Activated CD8-positive, alpha-beta T cell treated with anti-CD3 and anti-CD28 coated beads for 36 hours (primary cell): ENCODE measurements at regions of chr1 and their contacts with region 1.

Region 1: GRCh38 chr1:9867408-9868243 is 42.4 kb downstream of the CTNNBIP1 start:
- DNase-seq: peak; percentile 94
- ATAC-seq: peak; percentile 99
- H3K4me3 Mint-ChIP-seq: no peak overlapping the region
- H3K27ac Mint-ChIP-seq: no peak overlapping the region
- H3K4me1 Mint-ChIP-seq: no peaks in the 10 kb centered on the region
- H3K27me3 Mint-ChIP-seq: no peaks in the 10 kb centered on the region
- CTCF ChIP-seq: peak; percentile 94

Region 2: DNA sequence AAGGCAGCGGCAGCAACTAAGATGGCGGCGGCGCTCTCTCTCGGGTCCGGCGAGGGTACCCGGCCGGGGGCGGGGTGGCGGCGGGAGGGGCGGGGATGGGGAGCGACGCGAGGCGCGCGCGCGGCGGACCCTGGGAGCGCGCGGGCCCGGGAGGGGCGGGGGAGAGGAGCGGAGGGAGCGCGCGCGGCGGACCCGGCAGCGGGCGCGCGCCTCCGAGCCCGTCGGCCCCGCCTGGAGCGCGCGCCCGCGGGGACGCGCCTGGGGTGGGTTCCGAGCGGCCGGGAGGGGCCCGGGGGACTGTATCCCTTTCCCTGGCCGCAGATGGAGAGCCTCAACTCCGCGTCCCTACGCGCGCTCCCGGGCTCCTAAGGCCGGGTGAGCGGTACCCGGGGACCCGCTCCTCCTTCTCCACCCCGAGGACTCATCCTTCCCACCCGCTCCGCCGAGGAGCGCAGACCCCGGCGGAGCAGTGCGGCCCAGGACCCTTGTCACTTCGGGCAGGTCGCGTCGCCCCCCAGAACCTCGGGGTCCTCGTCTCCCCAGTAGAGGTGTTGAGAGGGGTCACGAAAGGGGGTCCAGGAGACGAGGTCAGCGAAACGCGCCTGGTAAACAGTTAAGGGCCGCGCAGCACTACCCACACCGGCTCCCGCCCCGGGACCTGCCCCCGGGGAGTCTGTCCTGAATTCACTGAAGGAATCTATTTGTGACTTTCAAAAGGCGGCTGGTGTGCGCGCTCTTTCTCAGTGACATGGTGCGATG is 43.5 kb before region 1 on chr1 and contains the start of gene CLSTN1:
- CTCF ChIA-PET with region 1: interaction called, 11 read pairs
- POLR2A ChIA-PET with region 1: interaction called, 3 read pairs
- intact Hi-C with region 1: no loop called
- DNase-seq: peak; percentile 92
- ATAC-seq: peak; percentile 75
- H3K4me3 Mint-ChIP-seq: peak within 1 kb of the TSS; percentile 87
- H3K27ac Mint-ChIP-seq: peak within 1 kb of the TSS; percentile 82
- H3K4me1 Mint-ChIP-seq: peaks cover 35% of the 10 kb centered on the region
- H3K27me3 Mint-ChIP-seq: peaks cover 9% of the 10 kb centered on the region
- CTCF ChIP-seq: no peak
- total RNA-seq, gene CLSTN1: 29.3 to 29.9 TPM

Region 3: GRCh38 chr1:10128101-10128765 is 260.6 kb after region 1 on chr1:
- CTCF ChIA-PET with region 1: no interaction called
- POLR2A ChIA-PET with region 1: no interaction called
- intact Hi-C with region 1: no loop called
- DNase-seq: no peak
- ATAC-seq: no peak
- H3K4me3 Mint-ChIP-seq: no peak overlapping the region
- H3K27ac Mint-ChIP-seq: no peak overlapping the region
- H3K4me1 Mint-ChIP-seq: no peaks in the 10 kb centered on the region
- H3K27me3 Mint-ChIP-seq: no peaks in the 10 kb centered on the region
- CTCF ChIP-seq: no peak